Aorta (tissue), 5 donors: ENCODE measurements at regions of chr17 and their contacts with region 1.

Region 1: DNA sequence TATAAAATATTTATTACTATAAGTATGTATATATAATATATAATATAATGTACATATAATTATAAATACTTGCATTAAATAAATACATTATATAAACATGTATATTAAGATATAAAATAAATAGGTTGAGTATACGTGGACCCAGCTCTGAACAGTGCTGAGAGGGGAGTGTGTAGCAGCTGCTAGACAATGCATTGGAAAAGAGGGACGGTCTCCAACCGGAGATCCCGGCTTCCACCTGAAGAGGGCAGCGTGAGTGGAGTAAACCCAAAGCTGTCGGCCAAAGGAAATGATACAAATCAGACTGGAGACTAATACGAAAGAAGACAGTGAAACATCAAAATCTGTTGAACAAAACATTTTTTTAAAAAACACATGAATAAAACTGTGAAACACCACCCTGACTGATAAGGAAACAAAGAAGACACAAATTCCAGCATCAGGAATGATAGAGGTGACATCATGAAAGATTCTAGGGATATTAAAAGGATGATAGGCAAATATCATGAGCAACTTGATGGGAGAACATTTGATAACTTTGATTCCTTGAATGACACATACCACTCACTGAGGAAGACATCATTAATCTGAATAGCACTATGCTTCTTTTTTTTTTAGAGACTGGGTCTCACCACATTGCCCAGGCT is 125.4 kb upstream of the CHMP6 start:
- DNase-seq: peak; percentile 81 to 90
- ATAC-seq: no peak
- H3K4me3 ChIP-seq: no peak overlapping the region
- H3K27ac ChIP-seq: no peak overlapping the region
- H3K4me1 ChIP-seq: no peaks in the 10 kb centered on the region
- H3K27me3 ChIP-seq: no peaks in the 10 kb centered on the region

Region 2: GRCh38 chr17:80968602-80969029 is 102.3 kb after region 1 on chr17:
- intact Hi-C with region 1: loop called in 1 of 2 experiments (anchors 5 kb)
- DNase-seq: peak; percentile 50 to 88
- ATAC-seq: peak; percentile 37
- H3K4me3 ChIP-seq: no peak overlapping the region
- H3K27ac ChIP-seq: peak overlapping the region in 1 of 2 donors; percentile 7
- H3K4me1 ChIP-seq: no peaks in the 10 kb centered on the region
- H3K27me3 ChIP-seq: no peaks in the 10 kb centered on the region